ENCODE measurements at regions of chr5 and their contacts with region 1.

Region 1: DNA sequence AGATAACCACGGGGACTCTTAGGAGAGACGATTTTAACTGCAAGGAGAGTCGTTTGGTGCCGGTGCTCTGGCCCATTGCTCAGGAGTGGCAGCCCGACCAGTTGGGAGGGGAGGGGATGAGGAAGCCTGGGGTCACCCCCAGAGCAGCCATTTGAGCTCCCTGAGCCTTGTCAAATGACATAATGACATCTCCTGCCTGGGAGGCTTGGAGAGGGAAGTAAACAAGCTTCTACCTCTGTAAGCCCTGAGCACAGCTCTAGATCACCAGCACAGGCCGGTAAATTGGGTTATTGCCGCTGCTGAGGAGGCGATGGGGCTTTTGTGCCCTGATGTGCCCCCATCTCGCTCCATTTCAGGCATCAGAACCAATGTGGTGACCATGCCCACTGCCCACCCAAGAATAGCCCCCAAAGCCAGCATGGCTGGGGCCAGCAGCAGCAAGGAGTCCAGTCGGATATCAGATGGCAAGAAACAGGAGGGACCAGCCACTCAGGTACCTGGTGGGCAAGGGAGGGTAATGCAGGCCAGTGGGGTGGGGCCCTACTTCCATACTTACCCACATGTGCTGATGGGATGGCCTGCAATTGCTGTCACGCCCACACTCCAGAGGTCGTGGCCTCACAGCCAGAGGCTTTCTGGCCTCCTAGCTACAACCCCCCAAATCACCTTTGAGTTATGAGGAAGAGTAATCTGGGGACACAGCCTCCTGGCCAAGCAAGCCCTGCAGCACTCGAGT is 23.0 kb downstream of the CD74 start:
- DNase-seq: no peak
- H3K4me3 ChIP-seq: no peak overlapping the region
- H3K27ac ChIP-seq: no peak overlapping the region
- H3K4me1 ChIP-seq: peaks cover 9% of the 10 kb centered on the region
- H3K27me3 ChIP-seq: no peaks in the 10 kb centered on the region
- CTCF ChIP-seq: no peak

Region 2: DNA sequence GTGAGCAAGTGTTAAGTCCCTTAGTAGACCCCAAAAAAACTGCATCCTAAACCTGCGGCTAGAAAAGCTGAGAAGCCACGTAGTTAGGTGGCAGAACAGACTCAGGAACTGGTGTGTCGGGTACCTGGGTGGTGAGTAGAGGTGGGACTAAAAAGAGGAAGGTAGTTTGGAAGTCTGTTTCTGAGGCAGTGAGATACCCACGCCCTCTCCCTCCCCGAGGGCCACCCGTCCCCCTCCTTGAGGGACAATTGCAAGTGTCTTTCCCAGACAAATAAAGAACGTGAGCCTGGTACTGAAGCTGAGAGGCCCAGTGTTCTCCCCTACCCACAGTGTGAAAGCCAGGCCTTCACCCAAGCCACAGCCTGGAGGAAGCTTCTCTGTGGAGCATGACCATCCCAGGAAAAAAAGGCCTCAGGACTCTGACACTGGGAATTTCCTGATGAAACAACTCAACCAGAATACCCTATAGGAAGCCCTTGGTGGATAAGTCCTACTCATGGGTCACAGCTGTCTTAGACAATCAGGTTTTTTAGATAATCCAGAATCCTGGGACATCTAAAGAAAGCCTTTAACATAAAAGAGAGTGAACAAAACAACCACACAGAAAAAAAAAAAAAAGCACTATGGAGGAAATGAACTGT is 30.1 kb after region 1 on chr5:
- CTCF ChIA-PET with region 1: no interaction called
- dilution Hi-C with region 1: loop called (anchors 5 kb)
- in situ Hi-C with region 1: no loop called
- intact Hi-C with region 1: no loop called
- DNase-seq: no peak
- H3K4me3 ChIP-seq: no peak overlapping the region
- H3K27ac ChIP-seq: no peak overlapping the region
- H3K4me1 ChIP-seq: no peaks in the 10 kb centered on the region
- H3K27me3 ChIP-seq: no peaks in the 10 kb centered on the region
- CTCF ChIP-seq: no peak

Region 3: GRCh38 chr5:150441813-150442698 is 52.4 kb after region 1 on chr5:
- CTCF ChIA-PET with region 1: no interaction called
- dilution Hi-C with region 1: loop called (anchors 5 kb)
- in situ Hi-C with region 1: no loop called
- intact Hi-C with region 1: no loop called
- DNase-seq: no peak
- H3K4me3 ChIP-seq: no peak overlapping the region
- H3K27ac ChIP-seq: no peak overlapping the region
- H3K4me1 ChIP-seq: peaks cover 6% of the 10 kb centered on the region
- H3K27me3 ChIP-seq: no peaks in the 10 kb centered on the region
- CTCF ChIP-seq: no peak

Measured in mammary epithelial cell (primary cell).